ENCODE measurements at regions of chr21 and their contacts with region 1.

Region 1: GRCh38 chr21:16082038-16082816 is 352.4 kb downstream of the USP25 start:
- DNase-seq: no peak
- H3K4me3 ChIP-seq: no peak overlapping the region
- H3K27ac ChIP-seq: peak overlapping the region; percentile 60
- H3K4me1 ChIP-seq: peaks cover 11% of the 10 kb centered on the region
- H3K27me3 ChIP-seq: no peaks in the 10 kb centered on the region
- CTCF ChIP-seq: peak in 1 of 3 experiments; percentile 39
- POLR2A ChIP-seq: no peak

Region 2: GRCh38 chr21:15932726-15933125 is 149.5 kb before region 1 on chr21:
- intact Hi-C with region 1: no loop called
- DNase-seq: no peak
- H3K4me3 ChIP-seq: no peak overlapping the region
- H3K27ac ChIP-seq: peak overlapping the region; percentile 4
- H3K4me1 ChIP-seq: peaks cover 17% of the 10 kb centered on the region
- H3K27me3 ChIP-seq: no peaks in the 10 kb centered on the region
- CTCF ChIP-seq: no peak
- POLR2A ChIP-seq: no peak

Region 3: DNA sequence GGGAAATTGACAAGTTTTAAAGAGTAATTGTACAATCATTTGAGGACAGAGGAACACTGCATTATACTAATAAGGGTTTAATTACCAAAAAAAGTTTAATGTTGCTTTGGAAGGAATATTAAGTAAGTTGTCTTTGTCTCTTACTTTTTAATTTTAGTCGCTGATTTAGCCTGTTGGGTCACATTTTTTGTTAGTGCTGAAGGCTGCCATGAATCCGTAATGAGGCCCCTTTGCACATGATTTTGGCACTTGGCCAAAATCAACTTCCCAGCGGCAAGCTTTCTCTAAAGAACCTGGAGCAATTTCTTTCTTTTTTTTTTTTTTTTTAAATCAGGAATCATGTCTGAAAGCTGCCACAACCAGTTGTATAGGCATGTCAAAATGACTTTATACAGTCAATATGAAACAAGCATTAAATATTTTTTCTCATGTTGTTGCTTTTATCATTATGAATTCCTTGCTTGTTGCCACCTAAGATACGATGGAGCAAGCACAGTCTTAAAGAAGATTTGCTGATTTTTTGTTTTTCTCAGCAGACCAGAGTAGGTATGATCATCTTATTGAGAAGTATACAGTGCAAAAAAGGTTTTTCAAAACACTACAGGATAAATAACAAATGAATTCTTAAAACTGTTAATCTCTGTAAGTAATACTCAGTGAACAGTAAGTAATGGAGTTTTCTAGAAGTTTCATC is 338.0 kb after region 1 on chr21:
- intact Hi-C with region 1: loop called (anchors 10 kb)
- DNase-seq: no peak
- H3K4me3 ChIP-seq: peak overlapping the region; percentile 46 to 49
- H3K27ac ChIP-seq: peak overlapping the region; percentile 85
- H3K4me1 ChIP-seq: peaks cover 14% of the 10 kb centered on the region
- H3K27me3 ChIP-seq: no peaks in the 10 kb centered on the region
- CTCF ChIP-seq: no peak
- POLR2A ChIP-seq: no peak

Measured in vagina (tissue), 2 donors.